AG04449 (cell line): ENCODE measurements at regions of chr1 and their contacts with region 1.

Region 1: GRCh38 chr1:26363549-26364448 is 8.8 kb downstream of the ZNF683 start:
- DNase-seq: no peak
- H3K4me3 ChIP-seq: no peak overlapping the region
- CTCF ChIP-seq: peak; percentile 92

Region 2: GRCh38 chr1:26102526-26102925 is 261.3 kb before region 1 on chr1:
- CTCF ChIA-PET with region 1: interaction called, 10 read pairs
- POLR2A ChIA-PET with region 1: no interaction called
- DNase-seq: no peak
- H3K4me3 ChIP-seq: no peak overlapping the region
- CTCF ChIP-seq: no peak

Region 3: GRCh38 chr1:26279456-26280332 is 84.1 kb before region 1 on chr1 and contains the start of gene SH3BGRL3:
- CTCF ChIA-PET with region 1: interaction called, 22 read pairs
- POLR2A ChIA-PET with region 1: no interaction called
- DNase-seq: no peak
- H3K4me3 ChIP-seq: peak within 1 kb of the TSS; percentile 81
- CTCF ChIP-seq: peak; percentile 75

Region 4: DNA sequence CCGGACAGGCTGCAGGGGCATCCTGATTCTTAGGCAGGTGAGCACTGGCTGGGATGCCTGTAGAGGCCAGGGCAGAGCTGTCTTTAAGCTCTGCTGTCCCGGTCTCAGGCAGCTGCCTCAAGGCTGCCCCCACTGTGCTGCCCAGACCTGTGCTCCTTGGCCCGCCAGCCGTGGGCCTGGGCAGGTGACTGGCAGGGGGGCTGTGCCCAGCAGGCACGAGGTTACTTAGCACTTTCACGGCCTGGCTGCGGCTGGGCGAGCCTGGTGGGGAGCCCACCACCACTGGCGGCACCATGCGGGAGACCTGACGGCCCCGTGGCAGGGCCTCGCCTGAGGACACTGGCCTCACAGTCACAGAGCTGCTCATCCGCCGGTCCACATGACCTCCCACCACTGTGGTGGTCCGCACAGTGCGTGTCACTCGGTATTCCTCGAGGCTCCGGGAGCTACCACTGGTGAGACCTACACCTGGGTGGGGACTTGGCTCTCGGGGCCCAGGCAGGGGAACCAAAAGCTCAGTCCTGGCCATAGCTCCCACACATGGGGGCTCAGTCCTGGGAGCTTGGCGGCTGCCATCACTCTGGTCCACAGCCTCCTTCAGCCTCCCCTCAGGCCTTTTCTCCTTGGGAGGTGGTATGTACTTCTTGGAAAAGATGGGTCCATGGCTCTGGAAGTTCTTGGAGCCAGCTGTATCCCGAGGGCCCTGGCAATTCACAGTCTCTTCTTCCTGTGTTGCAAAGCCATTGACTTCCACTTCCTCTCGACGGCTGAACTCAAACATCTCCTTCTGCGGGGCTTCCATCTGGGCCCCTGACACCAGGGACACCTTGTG is 17.9 kb before region 1 on chr1:
- CTCF ChIA-PET with region 1: interaction called, 78 read pairs
- POLR2A ChIA-PET with region 1: interaction called, 4 read pairs
- DNase-seq: no peak
- H3K4me3 ChIP-seq: no peak overlapping the region
- CTCF ChIP-seq: no peak

Region 5: GRCh38 chr1:26378088-26378878 is 14.5 kb after region 1 on chr1:
- CTCF ChIA-PET with region 1: interaction called, 203 read pairs
- POLR2A ChIA-PET with region 1: no interaction called
- DNase-seq: peak; percentile 92
- H3K4me3 ChIP-seq: peak overlapping the region; percentile 34
- CTCF ChIP-seq: no peak

Region 6: DNA sequence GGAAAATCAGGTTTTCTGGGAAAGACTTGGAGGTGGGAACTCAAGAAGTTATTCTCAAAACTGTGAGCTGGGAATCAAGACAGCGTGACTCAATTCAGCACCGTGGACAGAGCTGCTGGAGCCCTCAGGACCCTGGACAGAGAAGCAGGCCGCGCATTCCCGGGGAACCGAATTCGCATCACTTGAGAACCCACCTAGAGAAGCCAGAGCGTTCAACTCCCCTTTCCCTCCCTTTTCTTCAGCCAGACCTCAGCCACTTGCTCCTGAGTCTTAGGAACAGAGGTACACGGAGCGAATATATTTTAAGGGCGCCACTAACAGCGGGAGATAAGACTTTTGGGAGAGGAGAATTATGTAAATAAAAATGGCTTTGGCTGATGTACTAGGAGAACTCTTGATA is 44.8 kb after region 1 on chr1:
- CTCF ChIA-PET with region 1: interaction called, 16 read pairs
- POLR2A ChIA-PET with region 1: no interaction called
- DNase-seq: no peak
- H3K4me3 ChIP-seq: no peak overlapping the region
- CTCF ChIP-seq: no peak